Heart left ventricle (tissue), 16 donors: ENCODE measurements at regions of chr15 and their contacts with region 1.

Region 1: DNA sequence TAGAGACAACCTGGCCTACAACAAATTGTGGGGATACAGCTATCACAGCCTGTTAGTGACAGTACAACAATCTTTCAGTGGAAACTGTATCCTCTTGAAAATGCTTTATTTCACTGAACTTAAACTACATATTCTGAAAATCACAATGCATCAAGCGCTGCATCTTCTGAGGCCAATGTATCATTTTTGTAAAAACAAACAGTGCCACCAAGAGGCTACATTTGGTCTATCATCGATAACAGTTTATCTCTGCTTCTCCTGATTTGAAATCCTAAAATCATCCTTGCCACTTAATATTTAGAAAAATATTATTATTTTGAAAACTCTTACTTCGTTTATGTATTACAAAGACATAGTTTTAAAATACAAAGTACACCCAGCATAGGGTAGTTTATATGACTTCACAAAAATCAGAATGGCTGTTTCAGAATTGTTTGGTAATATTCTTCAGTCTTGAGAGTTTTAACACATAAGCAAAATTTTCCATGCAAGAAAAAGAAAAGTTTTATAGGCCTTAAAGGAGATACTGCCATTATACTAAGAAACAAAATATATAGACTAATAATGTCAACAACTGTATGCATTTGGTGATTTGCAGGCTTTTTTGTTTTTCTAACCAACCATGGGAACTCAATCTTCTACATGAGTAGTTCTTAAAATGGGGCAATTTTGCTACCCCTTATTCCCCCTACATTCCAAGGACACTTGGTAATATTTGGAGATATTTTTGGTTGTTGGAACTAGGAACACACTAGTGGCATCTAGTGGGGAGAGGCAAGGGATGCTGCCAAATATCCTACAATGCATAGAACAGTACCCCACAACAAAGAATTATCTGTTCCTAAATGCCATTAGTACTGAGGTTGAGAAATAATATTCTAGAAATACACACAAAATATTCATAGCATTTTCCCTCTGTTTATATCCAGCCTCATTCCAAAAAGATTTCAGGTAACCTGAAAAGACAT is 42.3 kb downstream of the WDR72 start:
- DNase-seq: no peak
- ATAC-seq: no peak
- H3K4me3 ChIP-seq: no peak overlapping the region
- H3K27ac ChIP-seq: no peak overlapping the region
- H3K4me1 ChIP-seq: no peaks in the 10 kb centered on the region
- H3K27me3 ChIP-seq: peaks cover 0 to 14% (median 0%) of the 10 kb centered on the region in 9 donors
- CTCF ChIP-seq: peak in 6 of 12 donors; percentile 13 to 41 (median 24)
- POLR2A ChIP-seq: no peak

Region 2: DNA sequence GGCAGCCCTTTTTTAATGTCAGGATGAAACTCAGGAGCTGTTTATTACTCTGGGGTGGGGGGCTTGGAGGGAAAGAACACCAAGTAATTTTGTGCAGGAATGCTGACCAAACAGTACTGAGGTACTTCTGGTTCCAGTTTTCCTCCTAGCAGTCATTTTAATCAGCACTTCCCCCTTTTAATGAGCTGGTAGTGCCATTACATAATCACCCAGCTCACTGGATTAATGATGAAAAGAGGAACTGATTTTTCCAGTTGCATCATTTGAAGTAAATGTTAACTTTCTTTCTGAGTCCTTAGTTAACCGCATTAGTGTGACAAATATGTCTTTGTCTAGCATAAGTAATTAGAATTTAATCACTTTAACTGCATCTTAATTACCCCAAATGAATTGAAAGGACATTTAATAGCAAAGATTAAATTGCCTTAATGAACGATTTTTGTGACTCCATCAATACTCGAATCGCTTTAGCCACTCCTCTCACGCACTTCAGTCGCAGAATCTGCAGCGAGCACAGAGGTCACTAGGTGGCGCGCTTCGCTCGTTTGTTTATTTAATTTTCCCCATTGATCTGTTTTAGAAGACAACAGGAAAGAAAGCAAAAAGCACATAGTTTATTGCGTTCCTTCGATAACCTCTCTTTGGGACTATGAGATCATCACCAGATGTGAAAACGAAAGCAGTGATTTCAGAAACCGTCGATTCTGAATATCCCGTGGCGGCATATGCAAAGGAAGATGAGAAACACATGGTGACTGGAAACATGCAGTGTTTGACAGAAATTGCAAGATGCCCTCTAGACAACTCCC is 936.8 kb before region 1 on chr15:
- intact Hi-C with region 1: loop called in 9 of 10 experiments (anchors 1 to 10 kb)
- DNase-seq: peak in 1 of 5 donors; percentile 47
- ATAC-seq: peak; percentile 17 to 61 (median 42)
- H3K4me3 ChIP-seq: peak overlapping the region in 4 of 12 donors; percentile 1 to 30 (median 16)
- H3K27ac ChIP-seq: peak overlapping the region in 1 of 12 donors; percentile 45
- H3K4me1 ChIP-seq: peaks cover 0 to 41% (median 6%) of the 10 kb centered on the region in 12 donors
- H3K27me3 ChIP-seq: peaks cover 37 to 95% (median 69%) of the 10 kb centered on the region in 9 donors
- CTCF ChIP-seq: peak; percentile 73 to 95 (median 84)
- POLR2A ChIP-seq: no peak

Region 3: GRCh38 chr15:52789601-52790161 is 927.5 kb before region 1 on chr15:
- intact Hi-C with region 1: loop called in 7 of 10 experiments (anchors 5 to 10 kb)
- DNase-seq: no peak
- ATAC-seq: no peak
- H3K4me3 ChIP-seq: peak overlapping the region in 11 of 12 donors; percentile 34 to 63 (median 51)
- H3K27ac ChIP-seq: no peak overlapping the region
- H3K4me1 ChIP-seq: peaks cover 0 to 66% (median 28%) of the 10 kb centered on the region in 12 donors
- H3K27me3 ChIP-seq: peaks cover 47 to 96% (median 88%) of the 10 kb centered on the region in 9 donors
- CTCF ChIP-seq: no peak
- POLR2A ChIP-seq: no peak

Region 4: GRCh38 chr15:53936137-53936536 is 218.9 kb after region 1 on chr15:
- intact Hi-C with region 1: no loop called
- DNase-seq: no peak
- ATAC-seq: no peak
- H3K4me3 ChIP-seq: no peak overlapping the region
- H3K27ac ChIP-seq: no peak overlapping the region
- H3K4me1 ChIP-seq: no peaks in the 10 kb centered on the region
- H3K27me3 ChIP-seq: no peaks in the 10 kb centered on the region
- CTCF ChIP-seq: no peak
- POLR2A ChIP-seq: no peak